WTC11 (cell line): ENCODE measurements at regions of chr11 and their contacts with region 1.

Region 1: GRCh38 chr11:67630228-67630942 is 648 bp upstream of the NUDT8 start:
- DNase-seq: peak; percentile 99
- ATAC-seq: peak; percentile 65
- H3K4me3 Mint-ChIP-seq: peak overlapping the region; percentile 79
- H3K27ac Mint-ChIP-seq: peak overlapping the region; percentile 89
- H3K4me1 Mint-ChIP-seq: peaks cover 31% of the 10 kb centered on the region
- H3K27me3 Mint-ChIP-seq: no peaks in the 10 kb centered on the region; the same call in 1 of the 2 replicates
- CTCF ChIP-seq: peak; percentile 66

Region 2: DNA sequence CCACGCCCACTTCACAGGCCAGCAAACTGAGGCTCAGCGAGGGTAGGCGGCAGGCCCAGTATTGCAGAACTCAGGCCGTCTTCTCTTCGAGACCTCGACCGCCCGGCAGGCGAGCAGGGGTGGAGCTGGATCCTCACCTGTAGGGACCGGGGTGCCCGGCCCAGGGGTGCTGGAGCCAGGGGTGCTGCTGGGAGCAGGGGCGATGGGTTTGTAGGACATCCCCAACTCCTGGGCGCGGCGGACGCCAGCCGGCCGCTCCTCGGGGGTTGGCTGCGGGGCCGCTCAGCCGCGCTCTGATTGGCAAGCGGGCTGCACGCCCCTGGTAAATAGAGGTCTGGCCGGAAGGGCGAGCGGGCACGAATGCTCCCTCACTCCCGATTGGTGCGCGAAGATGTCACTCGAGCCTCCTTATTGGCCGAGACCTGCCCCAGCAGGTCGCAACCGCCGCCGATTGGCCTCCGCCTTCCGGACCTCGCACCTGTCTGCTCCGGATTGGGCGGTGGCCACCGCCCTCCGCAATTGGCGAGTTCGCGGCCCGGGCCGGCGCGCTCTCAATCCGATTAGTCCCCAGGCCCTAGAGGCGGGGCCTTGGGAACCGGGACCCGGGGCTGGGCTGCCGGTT is 122.4 kb before region 1 on chr11 and contains the start of gene CDK2AP2:
- CTCF ChIA-PET with region 1: no interaction called
- POLR2A ChIA-PET with region 1: no interaction called
- DNase-seq: peak; percentile 100
- ATAC-seq: peak; percentile 84
- H3K4me3 Mint-ChIP-seq: peak within 1 kb of the TSS; percentile 83
- H3K27ac Mint-ChIP-seq: peak within 1 kb of the TSS; percentile 89
- H3K4me1 Mint-ChIP-seq: peaks cover 27% of the 10 kb centered on the region
- H3K27me3 Mint-ChIP-seq: peaks cover 23% of the 10 kb centered on the region
- CTCF ChIP-seq: no peak
- total RNA-seq, gene CDK2AP2: 47.6 to 53.1 TPM (median 52.5 TPM) in 3 replicates

Region 3: DNA sequence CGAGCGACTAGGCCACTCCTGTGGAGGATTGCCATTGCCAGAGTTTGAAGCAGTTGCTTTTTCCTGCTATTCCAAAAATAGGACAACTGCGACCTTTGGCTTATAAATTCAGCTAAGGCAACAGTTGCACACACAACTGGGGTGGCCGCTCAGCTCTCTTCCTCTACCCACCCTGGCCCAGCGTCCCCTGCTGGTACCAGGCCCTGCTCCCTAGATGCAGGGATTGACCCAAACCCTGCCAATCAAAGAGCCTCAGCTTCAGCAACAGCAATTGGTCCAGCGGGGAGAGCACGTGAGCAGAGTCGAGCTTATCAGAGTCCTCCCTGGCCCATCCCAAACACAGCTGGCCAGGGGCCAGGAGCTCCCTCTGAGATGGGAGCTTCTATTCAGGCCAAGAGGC is 85.1 kb before region 1 on chr11:
- CTCF ChIA-PET with region 1: interaction called, 13 read pairs
- POLR2A ChIA-PET with region 1: interaction called, 4 read pairs
- DNase-seq: peak; percentile 36
- ATAC-seq: peak; percentile 74
- H3K4me3 Mint-ChIP-seq: no peak overlapping the region
- H3K27ac Mint-ChIP-seq: no peak overlapping the region
- H3K4me1 Mint-ChIP-seq: peaks cover 6% of the 10 kb centered on the region
- H3K27me3 Mint-ChIP-seq: peaks cover 2% of the 10 kb centered on the region
- CTCF ChIP-seq: no peak

Region 4: GRCh38 chr11:67583247-67584204 is 46.9 kb before region 1 on chr11 and contains the start of gene GSTP1:
- CTCF ChIA-PET with region 1: interaction called, 10 read pairs
- POLR2A ChIA-PET with region 1: interaction called, 3 read pairs
- DNase-seq: peak; percentile 86
- ATAC-seq: peak; percentile 86
- H3K4me3 Mint-ChIP-seq: peak within 1 kb of the TSS; percentile 85
- H3K27ac Mint-ChIP-seq: peak within 1 kb of the TSS; percentile 100
- H3K4me1 Mint-ChIP-seq: peaks cover 53% of the 10 kb centered on the region
- H3K27me3 Mint-ChIP-seq: no peaks in the 10 kb centered on the region; the same call in 1 of the 2 replicates
- CTCF ChIP-seq: peak; percentile 69
- total RNA-seq, gene GSTP1: 1,404 to 1,452 TPM (median 1,412 TPM) in 3 replicates

Region 5: DNA sequence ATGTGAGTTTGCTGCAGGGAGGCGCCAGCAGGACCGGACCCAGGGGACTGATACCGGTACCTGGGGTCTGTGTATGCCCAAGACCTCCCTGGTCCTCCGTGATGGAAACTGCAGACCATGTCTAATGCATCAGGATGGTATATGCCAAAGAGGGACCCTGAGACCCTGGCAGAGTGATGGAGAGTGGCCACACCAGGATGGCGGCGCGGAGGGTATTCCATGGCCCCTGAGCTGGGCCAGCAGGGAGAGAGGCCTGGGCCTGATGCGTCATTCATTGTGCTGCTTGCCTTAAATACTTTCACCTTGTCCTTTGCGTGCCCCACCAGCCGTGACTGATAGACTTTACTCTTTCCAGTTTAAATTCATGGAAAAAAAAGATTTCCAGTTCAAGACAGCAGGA is 29.3 kb before region 1 on chr11:
- CTCF ChIA-PET with region 1: no interaction called
- POLR2A ChIA-PET with region 1: no interaction called
- DNase-seq: no peak
- ATAC-seq: no peak
- H3K4me3 Mint-ChIP-seq: no peak overlapping the region
- H3K27ac Mint-ChIP-seq: no peak overlapping the region
- H3K4me1 Mint-ChIP-seq: peaks cover 24% of the 10 kb centered on the region
- H3K27me3 Mint-ChIP-seq: peaks cover 16% of the 10 kb centered on the region
- CTCF ChIP-seq: no peak

Region 6: GRCh38 chr11:67648140-67649123 is 18.0 kb after region 1 on chr11:
- CTCF ChIA-PET with region 1: interaction called, 37 read pairs
- POLR2A ChIA-PET with region 1: interaction called, 4 read pairs
- DNase-seq: peak; percentile 71
- ATAC-seq: peak; percentile 89
- H3K4me3 Mint-ChIP-seq: no peak overlapping the region
- H3K27ac Mint-ChIP-seq: no peak overlapping the region
- H3K4me1 Mint-ChIP-seq: peaks cover 6% of the 10 kb centered on the region
- H3K27me3 Mint-ChIP-seq: no peaks in the 10 kb centered on the region; the same call in 1 of the 2 replicates
- CTCF ChIP-seq: no peak

Region 7: GRCh38 chr11:67674442-67674901 is 44.1 kb after region 1 on chr11 and contains the start of gene ALDH3B2:
- CTCF ChIA-PET with region 1: interaction called, 18 read pairs
- POLR2A ChIA-PET with region 1: interaction called, 3 read pairs
- DNase-seq: no peak
- ATAC-seq: peak; percentile 91
- H3K4me3 Mint-ChIP-seq: no peak within 1 kb of the TSS
- H3K27ac Mint-ChIP-seq: peak within 1 kb of the TSS; percentile 63; the same call in 1 of the 2 replicates
- H3K4me1 Mint-ChIP-seq: peaks cover 20% of the 10 kb centered on the region
- H3K27me3 Mint-ChIP-seq: no peaks in the 10 kb centered on the region; the same call in 1 of the 2 replicates
- CTCF ChIP-seq: no peak
- total RNA-seq, gene ALDH3B2: 0.13 to 0.30 TPM (median 0.30 TPM) in 3 replicates

Region 8: GRCh38 chr11:67691149-67691548 is 60.8 kb after region 1 on chr11:
- CTCF ChIA-PET with region 1: interaction called, 22 read pairs
- POLR2A ChIA-PET with region 1: no interaction called
- DNase-seq: no peak
- ATAC-seq: peak; percentile 47
- H3K4me3 Mint-ChIP-seq: no peak overlapping the region
- H3K27ac Mint-ChIP-seq: no peak overlapping the region
- H3K4me1 Mint-ChIP-seq: no peaks in the 10 kb centered on the region
- H3K27me3 Mint-ChIP-seq: peaks cover 2% of the 10 kb centered on the region; the same call in 1 of the 2 replicates
- CTCF ChIP-seq: no peak